Motor neuron (in vitro differentiated cells): ENCODE measurements at regions of chr1 and their contacts with region 1.

Region 1: DNA sequence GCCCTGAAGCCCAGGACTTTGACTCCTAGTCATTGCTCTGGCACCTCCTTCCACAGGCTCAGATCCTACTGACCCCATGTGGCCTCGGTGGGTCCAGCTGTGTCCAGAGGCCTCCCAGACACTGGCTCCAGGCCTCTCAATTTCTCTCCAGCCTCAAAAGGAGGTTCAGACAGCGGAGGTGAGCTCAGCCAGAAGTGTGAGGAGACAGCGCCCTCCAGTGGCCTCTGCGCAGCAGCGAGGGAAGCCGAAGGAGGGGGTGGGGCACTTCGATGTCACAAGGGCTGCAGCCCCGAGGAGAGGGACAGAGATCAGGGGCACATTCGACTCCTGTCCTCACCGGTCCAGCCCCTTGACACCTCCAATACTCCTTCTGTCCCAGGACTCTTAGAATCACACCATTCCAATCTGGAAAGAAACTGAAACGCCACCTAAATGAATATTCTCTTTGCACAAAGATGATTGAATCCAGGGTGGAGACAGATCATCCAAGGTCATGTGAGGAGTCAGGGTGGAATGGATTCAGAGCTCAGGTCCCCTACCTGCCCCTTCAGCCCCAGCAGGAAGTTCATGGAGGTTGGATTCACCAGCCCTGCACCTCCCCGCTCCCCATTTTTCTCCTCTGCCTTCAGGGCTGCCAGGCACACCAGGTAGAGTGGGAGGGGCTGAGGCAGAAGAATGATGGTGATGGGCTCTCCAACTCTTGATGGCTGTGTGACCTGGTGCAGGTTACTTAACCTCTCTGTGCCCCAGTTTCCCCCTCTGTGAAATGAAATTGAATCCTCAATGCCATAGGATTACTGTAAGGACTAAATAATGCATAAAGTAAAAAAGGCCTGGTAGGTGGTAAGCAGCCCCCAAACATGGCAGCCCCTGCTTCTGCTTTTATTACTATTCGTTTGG is 34.8 kb upstream of the ZBTB40 start:
- ATAC-seq: peak; percentile 52 to 86 (median 76)
- H3K4me3 ChIP-seq: no peak overlapping the region
- H3K27ac ChIP-seq: no peak overlapping the region
- H3K4me1 ChIP-seq: peaks cover 34 to 40% of the 10 kb centered on the region in 2 donors

Region 2: DNA sequence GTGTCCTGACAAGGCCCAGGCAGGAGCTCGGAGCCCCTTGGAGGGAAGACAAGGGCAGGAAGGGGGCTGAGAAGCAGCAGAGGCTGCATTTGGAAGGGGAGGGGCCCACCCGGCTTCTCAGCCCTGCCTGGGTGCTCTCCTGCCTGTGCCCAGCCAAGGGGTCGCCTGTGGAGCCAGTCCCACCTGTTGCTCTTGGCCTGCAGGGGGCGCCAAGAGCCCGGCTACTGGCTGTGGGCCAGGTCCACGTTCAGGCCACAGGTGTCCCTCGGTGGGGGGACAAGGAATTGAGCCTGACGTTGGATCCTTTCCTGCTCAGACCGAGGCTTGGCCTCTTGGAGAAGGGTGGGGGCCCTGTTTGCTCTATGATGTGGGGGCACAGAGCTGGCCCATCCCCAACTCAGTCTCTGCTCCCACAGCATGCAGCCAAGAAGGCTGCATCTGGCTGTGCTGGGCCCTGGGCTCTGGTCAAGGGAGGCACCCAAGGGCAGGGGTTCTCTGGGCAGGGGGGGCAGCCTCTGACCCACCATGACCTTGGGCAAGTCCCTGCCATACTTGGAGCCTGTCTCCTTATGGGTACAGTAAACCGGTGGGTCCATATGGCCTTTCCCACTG is 284.8 kb before region 1 on chr1:
- in situ Hi-C with region 1: loop called in 8 of 9 experiments (anchors 10 kb)
- ATAC-seq: peak; percentile 64 to 95 (median 70)
- H3K4me3 ChIP-seq: no peak overlapping the region
- H3K27ac ChIP-seq: no peak overlapping the region
- H3K4me1 ChIP-seq: peaks cover 16 to 20% of the 10 kb centered on the region in 2 donors

Region 3: DNA sequence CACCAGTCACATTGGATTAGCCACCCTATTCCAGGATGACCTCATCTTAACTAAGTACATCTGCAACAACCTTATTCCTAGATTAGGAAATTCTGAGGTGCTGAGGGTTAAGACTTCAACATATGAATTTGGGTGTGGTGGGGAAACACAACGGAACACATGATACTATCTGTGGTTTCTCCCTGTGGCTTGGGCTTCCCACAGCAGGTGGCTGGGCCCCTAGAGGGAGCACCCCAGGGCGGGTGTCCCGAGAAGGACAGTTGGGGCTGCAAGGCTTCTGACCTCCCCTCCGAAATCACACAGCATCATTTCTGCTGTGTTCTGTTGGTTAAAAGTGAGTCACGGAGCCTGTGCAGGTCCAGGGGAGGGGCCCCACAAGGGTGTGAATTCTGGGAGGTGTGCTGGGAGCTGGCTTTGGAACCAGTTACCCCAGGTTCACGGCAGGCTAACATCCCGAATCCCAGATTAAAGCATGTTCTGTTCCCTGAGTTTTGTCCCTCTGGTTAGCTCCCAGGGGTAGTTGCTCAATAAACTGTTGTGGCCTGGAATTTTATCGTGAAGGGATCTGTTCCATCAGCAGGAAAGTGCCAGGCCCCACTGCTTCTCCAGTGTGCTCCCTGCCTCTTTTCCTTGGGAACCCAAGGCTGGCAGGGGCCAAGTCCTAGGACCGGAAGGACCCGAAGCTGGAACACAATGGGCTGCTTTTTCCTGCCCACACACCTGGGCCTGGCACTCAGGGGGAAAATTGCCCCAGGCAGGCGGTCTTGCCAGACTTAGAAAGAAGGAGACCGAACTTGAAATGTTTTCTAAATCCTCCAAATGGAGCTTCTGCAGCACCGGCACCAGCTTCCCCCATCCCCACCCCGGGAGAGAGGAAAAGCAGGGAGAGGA is 119.9 kb before region 1 on chr1:
- in situ Hi-C with region 1: no loop called
- ATAC-seq: peak in 3 of 8 experiments; percentile 80 to 95 (median 88)
- H3K4me3 ChIP-seq: no peak overlapping the region
- H3K27ac ChIP-seq: no peak overlapping the region
- H3K4me1 ChIP-seq: peaks cover 6 to 9% of the 10 kb centered on the region in 2 donors

Region 4: DNA sequence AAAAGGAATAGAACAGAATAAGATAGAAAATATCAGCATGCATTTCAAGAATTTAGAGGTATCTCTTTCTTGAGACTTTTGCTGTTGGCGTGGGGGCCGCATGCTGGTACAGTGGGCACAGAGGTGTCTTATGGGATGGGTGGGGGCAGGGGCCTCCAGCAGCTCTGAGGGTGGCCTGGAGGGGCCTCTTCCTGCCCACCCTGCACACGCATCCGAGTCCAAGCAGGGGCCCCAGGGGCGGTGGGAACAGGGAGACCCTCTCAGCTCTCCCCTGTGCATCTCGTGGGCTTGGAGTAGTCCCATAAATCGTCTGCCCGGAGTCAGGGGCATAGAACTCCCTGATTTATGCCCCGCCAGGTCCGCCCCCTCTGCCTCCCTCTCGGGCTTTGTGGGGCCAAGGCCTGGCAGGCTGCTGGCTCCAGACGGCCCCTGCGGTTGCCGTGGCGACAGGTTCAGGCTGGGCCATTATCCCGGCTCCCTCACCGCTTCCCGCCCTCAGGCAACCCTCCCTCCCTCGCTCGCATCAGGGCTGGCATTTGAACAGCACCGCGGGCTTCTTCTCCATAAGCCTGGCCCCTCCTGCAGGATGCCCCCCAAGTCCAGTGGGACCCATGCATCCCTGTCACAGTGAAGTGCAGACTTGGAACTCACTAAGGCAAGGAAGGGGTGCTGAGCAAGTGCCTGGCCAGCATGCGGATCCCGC is 98.4 kb before region 1 on chr1:
- in situ Hi-C with region 1: no loop called
- ATAC-seq: peak in 6 of 8 experiments; percentile 35 to 95 (median 92)
- H3K4me3 ChIP-seq: no peak overlapping the region
- H3K27ac ChIP-seq: peak overlapping the region; percentile 69 to 71
- H3K4me1 ChIP-seq: peaks cover 49 to 56% of the 10 kb centered on the region in 2 donors